Activated T-helper 2 cell treated with anti-CD3 and anti-CD28 coated beads, Interferon-gamma antibody, Interleukin-2, Interleukin-4, amounts not matched to agents 10 μg/mL and 5 μg/mL and 100 μg/mL, durations not matched to agents 14 hours and 24 hours and 36 hours (primary cell): ENCODE measurements at regions of chr4 and their contacts with region 1.

Region 1: GRCh38 chr4:80072744-80073472 is at the start of gene ANTXR2:
- DNase-seq: peak; percentile 65
- H3K4me3 Mint-ChIP-seq: peak within 1 kb of the TSS; percentile 87
- H3K27ac Mint-ChIP-seq: peak within 1 kb of the TSS; percentile 75
- H3K4me1 Mint-ChIP-seq: peaks cover 71% of the 10 kb centered on the region
- H3K27me3 Mint-ChIP-seq: peaks cover 2% of the 10 kb centered on the region
- total RNA-seq, gene ANTXR2: 3.2 and 3.6 TPM in 2 replicates

Region 2: GRCh38 chr4:78656968-78657445 is 1415.9 kb before region 1 on chr4:
- intact Hi-C with region 1: loop called (anchors 10 kb)
- DNase-seq: no peak
- H3K4me3 Mint-ChIP-seq: peak overlapping the region; percentile 24
- H3K27ac Mint-ChIP-seq: peak overlapping the region; percentile 37
- H3K4me1 Mint-ChIP-seq: peaks cover 42% of the 10 kb centered on the region
- H3K27me3 Mint-ChIP-seq: peaks cover 12% of the 10 kb centered on the region

Region 3: DNA sequence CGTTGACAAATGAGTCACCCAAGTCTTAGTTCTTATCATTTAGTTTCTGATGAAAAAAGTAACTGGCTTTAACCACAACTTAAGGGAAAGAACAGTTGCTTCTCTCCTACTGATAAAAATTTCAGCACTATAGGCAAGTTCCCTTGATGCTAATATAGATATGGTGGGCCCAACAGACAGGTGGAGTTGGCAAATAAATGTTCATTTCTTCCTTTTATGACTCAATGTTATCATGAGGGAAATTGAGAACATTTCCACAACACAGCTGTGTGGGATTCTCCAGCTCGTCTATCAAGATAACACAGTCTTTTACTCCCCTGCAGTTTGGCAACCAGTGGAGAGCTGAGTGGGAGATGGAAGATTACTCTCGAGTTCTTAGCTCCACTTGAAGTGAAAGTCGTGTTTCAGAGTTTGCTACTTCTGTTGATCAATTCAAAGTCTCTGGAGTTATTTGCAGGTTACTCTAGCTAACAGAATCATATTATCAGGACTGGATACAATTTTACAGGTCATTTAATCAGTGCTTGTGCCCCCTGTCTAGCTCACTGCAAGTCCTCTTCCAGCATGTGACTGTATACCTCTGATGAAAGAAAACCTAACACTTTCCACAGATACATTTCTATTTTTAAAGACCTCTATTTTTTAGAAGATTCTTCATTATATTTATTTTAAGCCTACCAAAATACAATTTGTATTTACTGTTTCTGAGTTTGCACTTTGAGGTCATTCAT is 394.3 kb before region 1 on chr4:
- intact Hi-C with region 1: loop called (anchors 5 kb)
- DNase-seq: no peak
- H3K4me3 Mint-ChIP-seq: no peak overlapping the region
- H3K27ac Mint-ChIP-seq: peak overlapping the region; percentile 14
- H3K4me1 Mint-ChIP-seq: peaks cover 29% of the 10 kb centered on the region
- H3K27me3 Mint-ChIP-seq: peaks cover 6% of the 10 kb centered on the region

Region 4: GRCh38 chr4:79917246-79917645 is 155.7 kb before region 1 on chr4:
- intact Hi-C with region 1: loop called (anchors 5 kb)
- DNase-seq: peak; percentile 33
- H3K4me3 Mint-ChIP-seq: no peak overlapping the region
- H3K27ac Mint-ChIP-seq: no peak overlapping the region
- H3K4me1 Mint-ChIP-seq: peaks cover 15% of the 10 kb centered on the region
- H3K27me3 Mint-ChIP-seq: peaks cover 5% of the 10 kb centered on the region

Region 5: GRCh38 chr4:80017125-80017854 is 55.6 kb before region 1 on chr4:
- intact Hi-C with region 1: no loop called
- DNase-seq: no peak
- H3K4me3 Mint-ChIP-seq: no peak overlapping the region
- H3K27ac Mint-ChIP-seq: no peak overlapping the region
- H3K4me1 Mint-ChIP-seq: peaks cover 5% of the 10 kb centered on the region
- H3K27me3 Mint-ChIP-seq: no peaks in the 10 kb centered on the region

Region 6: GRCh38 chr4:80058740-80059139 is 14.2 kb before region 1 on chr4:
- intact Hi-C with region 1: loop called (anchors 1 kb)
- DNase-seq: peak; percentile 41
- H3K4me3 Mint-ChIP-seq: peak overlapping the region; percentile 72
- H3K27ac Mint-ChIP-seq: peak overlapping the region; percentile 94
- H3K4me1 Mint-ChIP-seq: peaks cover 42% of the 10 kb centered on the region
- H3K27me3 Mint-ChIP-seq: no peaks in the 10 kb centered on the region

Region 7: DNA sequence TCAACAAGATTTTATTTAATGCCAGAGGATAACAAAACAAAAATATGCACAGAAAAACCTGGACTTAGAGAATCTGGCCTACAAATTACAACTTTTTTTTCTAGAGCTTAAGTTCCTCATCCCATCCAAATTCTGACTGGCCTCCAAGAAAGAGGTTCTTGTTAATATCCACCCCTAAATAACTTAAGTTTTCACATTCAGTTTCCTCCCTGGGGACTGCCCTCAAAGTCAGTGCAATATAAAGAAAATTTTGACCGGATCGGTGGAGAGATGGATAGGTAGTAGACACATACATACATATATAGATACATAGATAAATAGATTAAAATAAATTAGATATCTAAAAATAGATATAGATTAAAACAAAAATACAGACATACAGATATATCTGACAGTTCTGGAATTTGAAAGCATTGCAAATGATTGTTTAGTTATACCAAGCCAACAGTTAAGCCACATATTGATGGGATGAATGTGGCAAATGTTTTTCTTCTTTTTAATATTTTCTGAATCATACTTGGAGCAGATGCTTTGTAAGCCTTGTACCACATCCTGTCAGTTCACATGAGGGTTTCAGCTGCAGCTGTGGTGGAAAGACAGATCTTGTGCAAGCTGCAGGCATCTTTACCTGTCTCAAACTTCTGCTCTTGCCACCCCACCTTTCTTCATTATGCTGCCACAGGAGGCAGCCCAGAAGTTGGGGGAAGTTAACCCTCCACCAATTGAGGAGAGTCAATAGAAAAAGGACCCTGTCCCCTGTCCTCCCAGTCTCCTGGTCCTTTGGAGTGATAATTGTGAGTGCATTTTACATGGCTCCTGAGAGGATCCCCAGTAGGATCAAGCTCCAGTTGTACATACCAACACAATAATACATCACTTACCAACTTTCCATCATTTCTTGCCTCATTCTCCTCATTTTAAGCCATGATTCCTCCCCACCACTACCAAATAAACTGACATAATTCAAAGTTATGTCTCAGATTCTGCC is 65.9 kb after region 1 on chr4:
- intact Hi-C with region 1: loop called (anchors 2 kb)
- DNase-seq: peak; percentile 54
- H3K4me3 Mint-ChIP-seq: peak overlapping the region; percentile 2
- H3K27ac Mint-ChIP-seq: peak overlapping the region; percentile 83
- H3K4me1 Mint-ChIP-seq: peaks cover 62% of the 10 kb centered on the region
- H3K27me3 Mint-ChIP-seq: no peaks in the 10 kb centered on the region

Region 8: DNA sequence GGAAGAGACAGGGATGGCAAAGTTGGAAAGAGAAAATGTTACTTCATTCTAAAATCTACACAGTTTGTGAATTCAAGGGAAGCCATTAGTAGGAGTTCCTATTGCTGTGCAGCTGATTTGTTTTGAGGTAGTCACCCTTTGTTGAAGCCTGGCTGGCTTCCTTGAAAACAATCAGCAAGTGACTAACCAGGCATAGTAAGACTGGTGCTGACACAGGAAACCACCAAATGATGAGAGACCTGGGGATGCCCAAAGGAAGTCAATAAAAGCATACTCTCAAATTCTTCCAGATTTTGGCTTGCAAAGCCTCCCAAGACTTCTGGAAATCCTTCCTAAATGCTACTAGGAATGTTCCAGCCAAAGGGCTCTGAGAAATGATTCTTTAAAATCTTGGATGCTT is 100.5 kb after region 1 on chr4:
- intact Hi-C with region 1: loop called (anchors 1 kb)
- DNase-seq: peak; percentile 53
- H3K4me3 Mint-ChIP-seq: peak overlapping the region; percentile 37
- H3K27ac Mint-ChIP-seq: peak overlapping the region; percentile 89
- H3K4me1 Mint-ChIP-seq: peaks cover 47% of the 10 kb centered on the region
- H3K27me3 Mint-ChIP-seq: no peaks in the 10 kb centered on the region